Activated CD4-positive, alpha-beta memory T cell treated with anti-CD3 and anti-CD28 coated beads, Interleukin-2, amount 10 ng/mL, durations not matched to agents 7 days and 5 days (primary cell): ENCODE measurements at regions of chr2 and their contacts with region 1.

Region 1: DNA sequence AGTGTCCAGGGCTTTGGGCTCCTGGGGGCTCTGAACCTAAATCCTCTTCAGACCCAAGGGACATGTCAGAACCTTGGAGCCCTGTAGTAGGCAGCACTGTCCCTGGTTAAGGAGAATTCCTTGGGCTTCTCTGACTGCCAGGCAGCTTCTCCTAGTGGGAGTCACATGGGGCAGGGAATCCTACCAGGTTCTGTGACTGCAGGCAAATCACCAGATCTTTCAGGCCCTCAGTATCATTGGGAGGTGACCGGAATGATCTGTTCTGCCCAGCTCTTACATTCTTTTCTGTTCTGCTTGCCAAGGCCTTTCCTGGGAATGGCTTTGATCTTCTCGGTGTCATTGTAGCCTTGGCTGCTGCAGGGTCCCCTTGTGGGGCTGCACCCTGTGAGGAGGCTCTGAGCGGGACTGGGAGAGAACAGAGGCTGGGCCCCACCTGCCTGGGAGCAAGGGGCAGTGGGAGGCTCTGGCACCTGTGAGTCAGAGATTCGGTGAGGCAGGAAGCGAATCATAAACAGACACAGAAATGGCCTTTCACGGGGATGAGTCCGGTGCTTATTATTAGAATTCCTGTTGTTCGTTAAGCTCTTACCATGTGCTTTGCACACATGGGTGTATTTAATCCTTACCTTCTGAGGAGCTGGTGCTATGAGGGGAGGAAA is 14.1 kb downstream of the CEP68 start:
- DNase-seq: no peak
- H3K4me3 Mint-ChIP-seq: no peak overlapping the region
- H3K27ac Mint-ChIP-seq: peak overlapping the region; percentile 44
- H3K4me1 Mint-ChIP-seq: peaks cover 32% of the 10 kb centered on the region
- H3K27me3 Mint-ChIP-seq: no peaks in the 10 kb centered on the region

Region 2: DNA sequence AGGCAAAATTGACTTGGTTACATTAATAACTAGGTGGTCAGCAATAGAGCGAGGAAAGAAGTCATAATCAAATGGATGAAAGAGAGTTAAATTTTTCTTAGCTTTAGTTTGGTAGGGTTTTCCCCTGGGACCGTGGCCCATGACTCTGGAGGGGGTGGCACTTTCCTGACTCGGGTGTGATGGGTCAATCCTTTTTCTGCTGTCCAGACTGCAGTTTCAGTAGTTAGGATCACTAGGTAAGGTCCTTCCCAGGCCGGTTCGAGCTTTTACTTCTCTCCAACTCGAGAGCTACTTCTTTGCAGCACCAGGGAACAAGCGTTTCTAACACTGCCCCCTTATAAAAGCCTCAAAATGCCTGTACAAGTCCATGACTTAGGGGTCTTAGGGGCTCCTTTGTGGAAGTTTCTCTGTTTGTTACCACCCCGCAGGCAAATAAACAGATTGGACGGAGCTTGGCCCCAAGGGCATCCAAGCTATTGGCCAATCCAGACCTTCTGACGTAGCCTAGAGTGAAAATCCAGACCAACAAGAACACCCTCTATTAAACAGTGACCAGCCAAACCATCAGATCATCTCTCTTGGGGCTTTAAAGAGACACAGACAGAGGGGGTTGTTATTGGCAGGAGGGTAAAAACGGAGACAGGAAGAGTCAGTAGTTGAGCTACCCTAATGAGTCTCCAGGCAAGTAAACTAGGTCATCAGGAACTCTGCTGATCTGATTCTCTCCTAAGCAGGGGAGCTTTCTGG is 23.5 kb before region 1 on chr2:
- CTCF ChIA-PET with region 1: no interaction called
- POLR2A ChIA-PET with region 1: no interaction called
- DNase-seq: no peak
- H3K4me3 Mint-ChIP-seq: no peak overlapping the region
- H3K27ac Mint-ChIP-seq: no peak overlapping the region
- H3K4me1 Mint-ChIP-seq: peaks cover 5% of the 10 kb centered on the region
- H3K27me3 Mint-ChIP-seq: peaks cover 7% of the 10 kb centered on the region

Region 3: DNA sequence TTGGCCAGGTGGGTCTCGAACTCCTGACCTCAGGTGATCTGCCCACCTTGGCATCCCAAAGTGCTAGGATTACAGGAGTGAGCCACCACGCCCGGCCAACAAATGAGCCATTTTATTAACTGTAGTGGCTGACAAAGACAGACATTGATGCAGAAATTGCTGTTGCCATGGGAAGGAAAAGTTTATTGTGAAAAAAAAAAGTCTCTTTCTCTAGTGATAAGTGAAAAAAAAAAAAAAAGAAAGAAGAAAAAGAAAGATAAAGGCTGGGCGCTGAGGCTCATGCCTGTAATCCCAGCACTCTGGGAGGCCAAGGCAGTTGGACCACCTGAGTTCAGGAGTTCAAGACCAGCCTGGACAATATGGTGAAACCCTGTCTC is 99.4 kb after region 1 on chr2:
- CTCF ChIA-PET with region 1: interaction called, 82 read pairs
- POLR2A ChIA-PET with region 1: interaction called, 7 read pairs
- DNase-seq: no peak
- H3K4me3 Mint-ChIP-seq: no peak overlapping the region
- H3K27ac Mint-ChIP-seq: no peak overlapping the region
- H3K4me1 Mint-ChIP-seq: no peaks in the 10 kb centered on the region
- H3K27me3 Mint-ChIP-seq: peaks cover 2% of the 10 kb centered on the region